AG04449 (cell line): ENCODE measurements at regions of chr22 and their contacts with region 1.

Region 1: DNA sequence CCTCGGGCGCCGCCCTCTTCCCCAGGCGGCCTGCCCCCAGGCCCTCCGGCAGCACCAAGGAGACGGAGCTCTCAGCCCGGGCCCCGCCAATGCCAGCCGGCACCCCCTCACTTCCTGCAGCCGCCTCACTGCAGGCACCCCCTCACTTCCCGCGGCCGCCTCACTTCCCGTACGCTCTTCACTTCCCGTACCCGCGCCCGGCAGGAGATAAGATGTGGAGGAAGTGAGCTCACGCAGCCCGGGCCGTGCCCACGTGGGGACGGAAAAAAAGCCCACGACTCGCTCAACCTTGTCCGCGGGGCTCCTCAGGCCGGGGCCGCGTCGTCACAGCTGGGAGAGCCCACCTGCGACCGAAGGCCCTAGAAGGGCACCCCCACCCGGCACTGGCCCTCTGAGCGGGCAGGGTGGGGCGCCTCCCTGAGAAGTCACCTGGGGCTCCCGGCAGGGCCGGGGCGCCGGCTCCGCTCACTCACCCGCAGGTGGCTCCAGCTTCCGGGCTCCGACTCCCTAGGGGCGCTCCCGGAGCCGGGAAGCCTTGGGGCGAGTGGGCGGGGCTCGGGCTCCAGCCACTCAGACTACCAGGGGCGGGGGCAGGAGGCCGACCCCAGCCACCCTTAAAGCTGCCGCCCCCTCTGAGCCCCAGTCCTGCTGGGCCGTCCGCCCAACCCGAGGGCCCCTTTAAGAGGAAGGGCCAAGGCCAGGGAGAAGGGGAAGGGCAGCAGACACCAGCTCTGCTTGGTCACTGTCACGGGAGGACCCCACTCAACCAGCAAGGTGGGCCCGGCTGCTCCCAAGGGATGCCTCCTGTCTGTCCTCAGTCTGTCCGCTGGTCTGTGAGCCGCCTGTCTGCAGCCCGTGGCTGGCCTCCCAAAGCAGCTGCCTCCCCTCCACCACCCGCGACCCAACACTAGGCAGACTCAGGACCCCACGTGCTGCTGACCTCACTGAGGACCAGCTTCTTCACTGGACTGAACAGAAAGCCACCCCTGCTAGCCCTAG is 31.4 kb downstream of the PISD start:
- DNase-seq: no peak
- H3K4me3 ChIP-seq: peak overlapping the region; percentile 76
- CTCF ChIP-seq: no peak

Region 2: GRCh38 chr22:31569126-31569525 is 61.5 kb before region 1 on chr22:
- CTCF ChIA-PET with region 1: interaction called, 417 read pairs
- POLR2A ChIA-PET with region 1: no interaction called
- DNase-seq: no peak
- H3K4me3 ChIP-seq: no peak overlapping the region
- CTCF ChIP-seq: no peak

Region 3: GRCh38 chr22:31602259-31602952 is 28.2 kb before region 1 on chr22:
- CTCF ChIA-PET with region 1: interaction called, 16 read pairs
- POLR2A ChIA-PET with region 1: interaction called, 7 read pairs
- DNase-seq: peak; percentile 78
- H3K4me3 ChIP-seq: no peak overlapping the region
- CTCF ChIP-seq: no peak

Region 4: DNA sequence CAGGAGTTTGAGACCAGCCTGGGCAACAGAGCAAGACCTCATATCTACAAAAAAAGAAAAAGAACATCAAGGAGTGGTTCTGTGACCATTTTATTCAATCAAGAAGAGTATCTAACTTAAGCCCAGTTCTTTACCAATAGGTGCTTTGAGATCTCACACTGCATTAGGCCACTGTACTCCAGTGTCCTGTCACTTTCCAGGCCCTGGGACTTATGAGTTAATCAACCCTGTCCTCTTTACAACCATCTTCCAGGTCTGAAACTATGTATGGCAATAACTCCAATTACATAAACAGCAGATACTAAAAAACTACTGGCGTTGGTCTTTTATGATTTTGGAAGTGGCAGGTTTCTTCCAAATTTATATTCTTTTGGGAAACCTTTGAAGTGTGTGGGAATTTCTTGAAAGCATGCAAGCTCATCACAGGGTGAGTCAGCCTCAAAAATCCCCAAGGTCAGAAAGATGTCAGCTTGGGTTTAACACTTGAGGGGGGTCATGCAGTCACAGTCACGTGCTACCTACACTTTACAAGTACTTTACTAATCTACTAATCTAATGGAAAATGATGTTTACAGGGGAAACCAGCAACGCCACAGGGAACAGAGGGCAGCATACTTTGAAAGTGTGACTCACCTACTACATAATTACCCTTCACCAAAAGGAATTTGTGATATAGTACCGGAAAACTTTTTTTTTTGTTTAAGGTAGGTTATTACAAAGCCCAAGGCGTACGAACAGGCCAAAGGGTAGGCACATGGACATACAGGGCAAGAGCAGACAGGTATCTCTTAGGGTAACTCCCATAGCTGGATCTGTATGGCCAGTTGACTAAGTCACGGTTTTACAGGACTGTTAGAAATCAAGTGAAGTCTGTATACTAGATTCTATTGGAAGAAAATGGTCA is 15.8 kb after region 1 on chr22:
- CTCF ChIA-PET with region 1: interaction called, 35 read pairs
- POLR2A ChIA-PET with region 1: interaction called, 3 read pairs
- DNase-seq: peak; percentile 96
- H3K4me3 ChIP-seq: no peak overlapping the region
- CTCF ChIP-seq: no peak